ENCODE measurements at regions of chr16 and their contacts with region 1.

Region 1: DNA sequence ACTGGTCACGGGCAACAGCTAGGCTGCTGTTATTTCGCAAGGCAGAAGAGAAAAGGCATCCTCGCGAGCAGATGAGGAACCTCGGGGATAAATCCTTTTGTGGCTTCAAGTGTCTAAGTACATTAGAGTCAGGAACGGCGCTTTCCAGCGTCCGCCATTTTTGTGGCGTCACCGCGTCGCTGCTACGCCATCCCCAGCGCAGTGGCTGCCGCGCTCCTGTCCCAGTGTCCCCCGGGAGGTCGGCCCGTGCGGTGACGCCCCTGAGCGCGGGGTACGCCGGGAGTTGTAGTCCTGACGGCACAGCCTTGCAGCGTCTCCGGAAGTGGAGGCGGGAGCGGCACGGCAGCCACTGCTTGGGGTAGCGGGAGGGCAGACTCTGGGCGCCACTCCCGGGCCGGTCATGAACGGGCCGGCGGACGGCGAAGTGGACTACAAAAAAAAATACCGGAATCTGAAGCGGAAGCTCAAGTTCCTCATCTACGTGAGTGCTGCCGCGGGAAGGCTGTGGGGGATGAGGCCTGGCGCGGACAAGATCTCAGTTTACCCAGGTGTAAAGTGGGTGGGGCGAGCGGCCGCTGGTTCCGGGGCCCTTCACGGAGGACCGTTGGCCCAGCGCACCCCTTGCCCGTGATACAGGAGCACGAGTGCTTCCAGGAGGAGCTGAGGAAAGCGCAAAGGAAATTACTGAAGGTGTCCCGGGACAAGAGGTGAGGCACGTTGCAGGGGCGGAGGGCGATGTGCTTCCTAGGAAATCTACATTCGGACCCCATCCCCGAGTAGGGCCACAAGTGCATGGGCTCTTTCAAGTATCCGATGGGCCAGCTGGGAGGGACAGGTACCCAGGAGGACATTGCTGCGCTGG is at the start of gene INO80E:
- DNase-seq: peak; percentile 99 to 100
- ATAC-seq: peak; percentile 99
- H3K4me3 ChIP-seq: peak within 1 kb of the TSS; percentile 62 to 66
- H3K27ac ChIP-seq: peak within 1 kb of the TSS in 1 of 2 donors; percentile 79
- H3K4me1 ChIP-seq: no peaks in the 10 kb centered on the region
- H3K27me3 ChIP-seq: no peaks in the 10 kb centered on the region
- total RNA-seq, gene INO80E: 46.1 to 73.1 TPM

Region 2: GRCh38 chr16:29900102-29900887 is 95.8 kb before region 1 on chr16 and contains the start of gene ASPHD1:
- intact Hi-C with region 1: no loop called
- DNase-seq: peak; percentile 78 to 88
- ATAC-seq: peak; percentile 87
- H3K4me3 ChIP-seq: peak within 1 kb of the TSS; percentile 6 to 72
- H3K27ac ChIP-seq: no peak within 1 kb of the TSS
- H3K4me1 ChIP-seq: no peaks in the 10 kb centered on the region
- H3K27me3 ChIP-seq: no peaks in the 10 kb centered on the region
- total RNA-seq, gene ASPHD1: 0.39 to 0.48 TPM

Region 3: GRCh38 chr16:29926005-29926710 is 70.0 kb before region 1 on chr16 and contains the start of gene KCTD13:
- intact Hi-C with region 1: loop called in 1 of 2 experiments (anchors 2 kb)
- DNase-seq: peak; percentile 88 to 95
- ATAC-seq: peak; percentile 99
- H3K4me3 ChIP-seq: peak within 1 kb of the TSS; percentile 80 to 85
- H3K27ac ChIP-seq: peak within 1 kb of the TSS in 1 of 2 donors; percentile 55
- H3K4me1 ChIP-seq: no peaks in the 10 kb centered on the region
- H3K27me3 ChIP-seq: no peaks in the 10 kb centered on the region
- total RNA-seq, gene KCTD13: 25.0 to 31.4 TPM

Region 4: GRCh38 chr16:30688675-30689074 is 692.5 kb after region 1 on chr16:
- intact Hi-C with region 1: no loop called
- DNase-seq: no peak
- ATAC-seq: no peak
- H3K4me3 ChIP-seq: no peak overlapping the region
- H3K27ac ChIP-seq: no peak overlapping the region
- H3K4me1 ChIP-seq: no peaks in the 10 kb centered on the region
- H3K27me3 ChIP-seq: no peaks in the 10 kb centered on the region

Region 5: GRCh38 chr16:31507929-31508705 is 1512.0 kb after region 1 on chr16 and contains the start of gene RUSF1:
- intact Hi-C with region 1: no loop called
- DNase-seq: peak; percentile 96 to 97
- ATAC-seq: peak; percentile 96
- H3K4me3 ChIP-seq: peak within 1 kb of the TSS; percentile 54 to 83
- H3K27ac ChIP-seq: peak within 1 kb of the TSS; percentile 66 to 89
- H3K4me1 ChIP-seq: no peaks in the 10 kb centered on the region
- H3K27me3 ChIP-seq: no peaks in the 10 kb centered on the region
- total RNA-seq, gene RUSF1: 50.6 to 62.4 TPM